Natural killer cell (primary cell): ENCODE measurements at regions of chr13 and their contacts with region 1.

Region 1: DNA sequence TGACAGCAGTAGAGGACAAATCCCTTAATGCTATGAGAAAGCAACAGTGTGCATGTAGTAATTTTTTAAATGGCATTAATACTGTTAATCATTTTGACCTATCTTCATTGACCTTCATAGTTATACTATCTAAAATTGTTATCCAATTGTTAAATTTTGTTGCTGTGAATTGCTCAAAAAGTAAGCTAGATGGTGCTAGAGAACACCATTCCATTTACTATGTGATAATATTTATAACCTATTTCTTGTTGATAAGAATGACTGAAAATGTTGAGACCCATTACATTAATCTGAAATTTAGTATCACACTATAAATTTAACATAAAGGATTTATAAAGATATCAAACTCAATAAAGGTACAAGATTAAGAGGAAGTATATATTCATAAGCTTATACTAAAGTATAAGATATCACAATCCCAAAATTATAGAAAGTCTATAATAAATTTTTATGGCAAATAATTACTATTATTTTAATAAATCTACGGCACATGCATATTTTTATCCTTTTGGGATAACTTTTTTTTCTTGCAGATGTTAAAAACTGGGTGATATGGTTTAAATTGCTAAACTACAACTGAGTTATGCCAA is 1573.3 kb downstream of the PCDH9 start:
- DNase-seq: no peak
- ATAC-seq: no peak
- H3K4me3 ChIP-seq: no peak overlapping the region
- H3K4me3 Mint-ChIP-seq: no peak overlapping the region
- H3K27ac ChIP-seq: no peak overlapping the region
- H3K27ac Mint-ChIP-seq: no peak overlapping the region
- H3K4me1 ChIP-seq: no peaks in the 10 kb centered on the region
- H3K4me1 Mint-ChIP-seq: no peaks in the 10 kb centered on the region
- H3K27me3 ChIP-seq: no peaks in the 10 kb centered on the region
- H3K27me3 Mint-ChIP-seq: no peaks in the 10 kb centered on the region
- CTCF ChIP-seq: no peak

Region 2: GRCh38 chr13:65217471-65217995 is 439.3 kb before region 1 on chr13:
- intact Hi-C with region 1: no loop called
- DNase-seq: no peak
- ATAC-seq: no peak
- H3K4me3 ChIP-seq: no peak overlapping the region
- H3K4me3 Mint-ChIP-seq: no peak overlapping the region
- H3K27ac ChIP-seq: no peak overlapping the region
- H3K27ac Mint-ChIP-seq: no peak overlapping the region
- H3K4me1 ChIP-seq: no peaks in the 10 kb centered on the region
- H3K4me1 Mint-ChIP-seq: no peaks in the 10 kb centered on the region
- H3K27me3 ChIP-seq: no peaks in the 10 kb centered on the region
- H3K27me3 Mint-ChIP-seq: no peaks in the 10 kb centered on the region
- CTCF ChIP-seq: no peak

Region 3: GRCh38 chr13:67238277-67238859 is 1581.5 kb after region 1 on chr13:
- intact Hi-C with region 1: loop called (anchors 5 kb)
- DNase-seq: peak in 1 of 2 donors; percentile 57
- ATAC-seq: peak; percentile 57 to 75 (median 67)
- H3K4me3 ChIP-seq: no peak overlapping the region
- H3K4me3 Mint-ChIP-seq: no peak overlapping the region
- H3K27ac ChIP-seq: no peak overlapping the region
- H3K27ac Mint-ChIP-seq: no peak overlapping the region
- H3K4me1 ChIP-seq: no peaks in the 10 kb centered on the region
- H3K4me1 Mint-ChIP-seq: no peaks in the 10 kb centered on the region
- H3K27me3 ChIP-seq: no peaks in the 10 kb centered on the region
- H3K27me3 Mint-ChIP-seq: peaks cover 2 to 9% of the 10 kb centered on the region in 2 donors
- CTCF ChIP-seq: peak; percentile 91